Panc1 (cell line): ENCODE measurements at regions of chr17 and their contacts with region 1.

Region 1: GRCh38 chr17:40522250-40522952 is 21.0 kb upstream of the TNS4 start:
- DNase-seq: no peak
- ATAC-seq: no peak
- H3K4me3 ChIP-seq: no peak overlapping the region
- H3K27ac ChIP-seq: no peak overlapping the region
- H3K4me1 ChIP-seq: peaks cover 5% of the 10 kb centered on the region; the same call in 1 of the 2 replicates
- H3K27me3 ChIP-seq: peaks cover 8% of the 10 kb centered on the region
- CTCF ChIP-seq: no peak

Region 2: GRCh38 chr17:40251576-40251975 is 270.8 kb before region 1 on chr17:
- CTCF ChIA-PET with region 1: no interaction called
- POLR2A ChIA-PET with region 1: interaction called, 10 read pairs
- in situ Hi-C with region 1: no loop called
- intact Hi-C with region 1: no loop called
- DNase-seq: peak; percentile 30
- ATAC-seq: peak; percentile 82
- H3K4me3 ChIP-seq: no peak overlapping the region
- H3K27ac ChIP-seq: no peak overlapping the region
- H3K4me1 ChIP-seq: peaks cover 8% of the 10 kb centered on the region
- H3K27me3 ChIP-seq: no peaks in the 10 kb centered on the region
- CTCF ChIP-seq: no peak

Region 3: GRCh38 chr17:40559954-40560591 is 37.7 kb after region 1 on chr17:
- CTCF ChIA-PET with region 1: no interaction called
- POLR2A ChIA-PET with region 1: no interaction called
- in situ Hi-C with region 1: loop called (anchors 5 kb)
- intact Hi-C with region 1: no loop called
- DNase-seq: peak; percentile 81
- ATAC-seq: peak; percentile 94
- H3K4me3 ChIP-seq: peak overlapping the region; percentile 20 to 53
- H3K27ac ChIP-seq: no peak overlapping the region; the same call in 1 of the 2 replicates
- H3K4me1 ChIP-seq: peaks cover 14% of the 10 kb centered on the region
- H3K27me3 ChIP-seq: peaks cover 10% of the 10 kb centered on the region; the same call in 1 of the 2 replicates
- CTCF ChIP-seq: peak; percentile 96